Activated CD4-positive, alpha-beta memory T cell treated with anti-CD3 and anti-CD28 coated beads for 36 hours (primary cell): ENCODE measurements at regions of chr11 and their contacts with region 1.

Region 1: GRCh38 chr11:66429983-66430602 is 8.6 kb downstream of the MRPL11 start:
- DNase-seq: peak; percentile 85
- H3K4me3 Mint-ChIP-seq: no peak overlapping the region
- H3K27ac Mint-ChIP-seq: no peak overlapping the region
- H3K4me1 Mint-ChIP-seq: no peaks in the 10 kb centered on the region
- H3K27me3 Mint-ChIP-seq: no peaks in the 10 kb centered on the region

Region 2: DNA sequence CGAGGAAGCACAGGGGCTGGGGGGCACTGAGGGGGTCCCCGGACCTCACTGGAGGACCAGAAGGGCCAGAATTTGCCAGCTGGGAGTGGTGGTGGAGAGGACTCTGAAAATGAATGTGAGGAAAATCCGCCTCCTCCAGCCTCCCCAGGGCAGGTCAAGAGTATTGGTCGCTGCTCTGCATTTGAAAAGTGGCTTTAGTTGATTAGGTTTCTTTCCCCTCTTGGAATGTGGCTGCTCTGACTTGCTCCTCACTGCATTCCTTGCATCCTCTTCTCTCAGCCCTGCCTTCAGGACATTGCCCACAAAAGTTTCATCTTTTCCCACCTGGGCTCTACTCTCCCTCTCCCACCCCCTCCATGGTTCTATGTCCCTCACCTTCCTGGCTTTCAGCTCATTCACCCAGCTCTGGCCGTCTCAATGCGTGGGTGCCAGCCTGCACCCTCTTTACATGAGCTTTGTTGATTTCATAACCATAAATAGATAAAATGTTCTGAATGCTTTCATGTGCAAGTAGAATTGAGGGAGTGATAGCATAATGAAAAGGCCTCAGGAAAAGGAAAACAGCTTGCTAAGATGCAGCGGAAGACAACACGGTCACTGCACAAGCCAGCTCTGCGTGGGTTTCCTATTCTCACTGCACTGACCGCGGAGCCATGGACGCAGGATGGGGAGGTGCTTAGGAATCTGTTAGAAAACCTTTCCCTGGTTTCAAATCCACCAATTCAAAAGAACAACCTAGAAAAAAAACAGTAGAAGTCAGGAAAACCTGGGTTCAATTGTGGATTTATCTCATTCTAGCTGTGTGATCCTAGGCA is 15.8 kb before region 1 on chr11:
- CTCF ChIA-PET with region 1: interaction called, 104 read pairs
- POLR2A ChIA-PET with region 1: no interaction called
- intact Hi-C with region 1: no loop called
- DNase-seq: no peak
- H3K4me3 Mint-ChIP-seq: no peak overlapping the region
- H3K27ac Mint-ChIP-seq: no peak overlapping the region
- H3K4me1 Mint-ChIP-seq: peaks cover 26% of the 10 kb centered on the region
- H3K27me3 Mint-ChIP-seq: peaks cover 59% of the 10 kb centered on the region